ENCODE measurements at regions of chr11 and their contacts with region 1.

Region 1: DNA sequence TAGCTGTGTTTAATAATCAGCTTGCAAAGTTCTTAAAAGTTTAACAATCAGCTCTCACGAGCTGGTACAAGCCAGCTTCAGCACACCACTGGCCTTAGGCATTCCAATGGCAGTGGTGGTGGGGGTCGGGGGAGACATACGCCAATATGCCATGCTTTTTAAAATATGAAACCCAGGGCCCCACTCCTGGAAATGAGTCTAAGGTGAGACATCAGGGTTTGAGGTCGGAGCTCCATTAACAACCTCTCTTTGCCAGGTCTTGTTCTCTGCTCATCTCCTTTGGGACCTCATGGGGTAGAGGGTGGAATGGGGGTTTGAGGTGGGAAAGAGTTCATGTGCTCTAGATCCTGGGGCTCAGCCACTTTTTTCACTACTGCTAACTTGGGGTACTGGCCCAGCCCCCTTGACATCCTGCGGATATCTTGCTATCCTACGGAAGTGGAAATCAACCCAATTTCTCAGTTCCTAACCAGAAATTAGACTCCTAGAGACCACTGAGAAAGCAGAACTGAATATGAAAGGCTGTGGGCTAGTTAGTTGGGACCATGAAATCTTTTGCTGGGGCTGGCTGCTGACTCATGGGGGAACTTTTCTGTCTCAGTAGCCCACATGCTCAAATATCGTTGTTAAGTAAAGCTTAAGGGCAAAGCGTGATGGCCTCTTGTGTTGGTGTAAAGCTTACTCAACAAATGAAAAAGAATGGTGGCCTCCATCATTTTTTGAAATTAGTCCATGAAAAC is 90.1 kb downstream of the PDHX start:
- DNase-seq: no peak
- H3K4me3 ChIP-seq: no peak overlapping the region
- H3K27ac ChIP-seq: no peak overlapping the region
- H3K4me1 ChIP-seq: peaks cover 25% of the 10 kb centered on the region
- H3K27me3 ChIP-seq: no peaks in the 10 kb centered on the region
- CTCF ChIP-seq: no peak

Region 2: GRCh38 chr11:34926101-34926830 is 80.3 kb before region 1 on chr11:
- CTCF ChIA-PET with region 1: no interaction called
- dilution Hi-C with region 1: no loop called
- in situ Hi-C with region 1: no loop called
- intact Hi-C with region 1: no loop called
- DNase-seq: peak; percentile 36
- H3K4me3 ChIP-seq: no peak overlapping the region
- H3K27ac ChIP-seq: no peak overlapping the region
- H3K4me1 ChIP-seq: peaks cover 4% of the 10 kb centered on the region
- H3K27me3 ChIP-seq: no peaks in the 10 kb centered on the region
- CTCF ChIP-seq: peak; percentile 63 to 66

Region 3: GRCh38 chr11:35030716-35031213 is 24.2 kb after region 1 on chr11:
- CTCF ChIA-PET with region 1: interaction called, 5 read pairs
- dilution Hi-C with region 1: no loop called
- in situ Hi-C with region 1: no loop called
- intact Hi-C with region 1: loop called (anchors 1 kb)
- DNase-seq: peak; percentile 97
- H3K4me3 ChIP-seq: peak overlapping the region in 1 of 3 experiments; percentile 4
- H3K27ac ChIP-seq: peak overlapping the region; percentile 97
- H3K4me1 ChIP-seq: peaks cover 45% of the 10 kb centered on the region
- H3K27me3 ChIP-seq: no peaks in the 10 kb centered on the region
- CTCF ChIP-seq: no peak

Region 4: GRCh38 chr11:35040221-35040942 is 33.8 kb after region 1 on chr11:
- CTCF ChIA-PET with region 1: interaction called, 3 read pairs
- dilution Hi-C with region 1: no loop called
- in situ Hi-C with region 1: no loop called
- intact Hi-C with region 1: loop called (anchors 1 kb)
- DNase-seq: peak; percentile 99
- H3K4me3 ChIP-seq: peak overlapping the region; percentile 4 to 40 (median 32)
- H3K27ac ChIP-seq: peak overlapping the region; percentile 97
- H3K4me1 ChIP-seq: peaks cover 64% of the 10 kb centered on the region
- H3K27me3 ChIP-seq: no peaks in the 10 kb centered on the region
- CTCF ChIP-seq: no peak

Region 5: GRCh38 chr11:35057926-35058668 is 51.5 kb after region 1 on chr11:
- CTCF ChIA-PET with region 1: no interaction called
- dilution Hi-C with region 1: no loop called
- in situ Hi-C with region 1: no loop called
- intact Hi-C with region 1: loop called (anchors 1 kb)
- DNase-seq: no peak
- H3K4me3 ChIP-seq: no peak overlapping the region
- H3K27ac ChIP-seq: peak overlapping the region; percentile 90
- H3K4me1 ChIP-seq: peaks cover 24% of the 10 kb centered on the region
- H3K27me3 ChIP-seq: no peaks in the 10 kb centered on the region
- CTCF ChIP-seq: no peak

Region 6: DNA sequence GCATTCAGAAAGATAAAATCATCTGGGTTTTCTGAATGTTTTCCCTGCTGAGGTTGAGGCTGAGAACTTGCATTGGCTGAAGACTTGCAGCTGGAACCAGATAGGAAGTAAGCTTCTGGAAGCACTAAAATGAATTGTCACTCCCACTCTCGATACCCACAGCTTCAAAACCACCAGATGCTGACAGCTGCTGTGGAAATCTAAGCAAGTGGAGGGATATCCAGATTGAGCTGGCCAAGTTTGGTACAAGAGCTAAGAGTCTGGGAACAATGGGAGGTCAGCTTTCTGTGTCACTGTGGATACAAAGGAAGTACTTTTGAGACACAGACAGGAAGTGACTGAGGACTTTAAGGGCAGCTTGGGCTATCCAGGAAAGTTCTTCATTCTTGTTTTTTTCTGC is 81.1 kb after region 1 on chr11:
- CTCF ChIA-PET with region 1: interaction called, 5 read pairs
- dilution Hi-C with region 1: loop called (anchors 5 kb)
- in situ Hi-C with region 1: no loop called
- intact Hi-C with region 1: loop called (anchors 2 kb)
- DNase-seq: no peak
- H3K4me3 ChIP-seq: no peak overlapping the region
- H3K27ac ChIP-seq: peak overlapping the region; percentile 87
- H3K4me1 ChIP-seq: peaks cover 49% of the 10 kb centered on the region
- H3K27me3 ChIP-seq: no peaks in the 10 kb centered on the region
- CTCF ChIP-seq: no peak

Region 7: DNA sequence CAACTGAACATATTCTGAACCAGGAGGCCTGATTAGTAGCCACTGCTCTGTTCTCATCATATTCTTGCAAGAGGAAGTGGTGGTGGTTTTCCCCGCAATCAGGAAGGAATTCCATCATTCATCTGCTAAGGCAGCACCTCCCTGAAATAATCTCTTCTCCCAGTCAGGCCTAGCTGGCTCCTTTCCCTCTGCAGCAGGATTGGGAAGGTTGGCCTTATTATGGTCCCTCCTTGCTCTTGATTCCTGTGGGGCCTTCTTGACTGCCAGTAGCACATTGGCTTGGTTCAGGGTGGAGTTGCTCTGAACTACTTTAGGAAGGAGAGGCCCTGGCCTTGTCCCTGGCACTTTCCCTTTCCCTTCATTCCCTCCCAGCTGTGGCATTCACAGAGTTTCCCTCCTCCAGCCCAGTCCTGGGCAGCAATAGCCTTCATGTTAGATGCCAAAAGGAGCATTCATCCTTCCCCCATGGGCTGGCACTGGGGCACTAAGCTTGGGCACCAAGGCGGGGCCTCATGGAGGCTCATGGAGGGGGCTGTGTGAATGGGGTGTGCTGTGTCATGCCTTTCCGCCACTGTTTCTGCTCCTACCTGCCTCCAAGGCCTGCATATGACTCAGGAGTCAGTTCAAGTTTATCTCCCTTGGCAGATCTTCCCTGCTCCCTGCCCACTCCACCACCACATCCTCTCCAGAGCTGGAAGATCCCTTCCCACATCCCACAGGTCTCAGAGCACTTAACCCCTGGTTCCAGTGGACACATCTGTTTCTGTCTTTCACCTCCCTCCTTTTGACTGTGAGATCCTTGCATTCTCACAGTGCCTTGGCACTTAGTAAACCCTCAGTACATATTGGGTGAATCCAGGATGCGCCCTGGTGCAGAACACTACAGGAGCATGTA is 104.8 kb after region 1 on chr11:
- CTCF ChIA-PET with region 1: no interaction called
- dilution Hi-C with region 1: no loop called
- in situ Hi-C with region 1: no loop called
- intact Hi-C with region 1: loop called (anchors 1 kb)
- DNase-seq: peak; percentile 99
- H3K4me3 ChIP-seq: peak overlapping the region in 1 of 3 experiments; percentile 17
- H3K27ac ChIP-seq: peak overlapping the region; percentile 94
- H3K4me1 ChIP-seq: peaks cover 70% of the 10 kb centered on the region
- H3K27me3 ChIP-seq: no peaks in the 10 kb centered on the region
- CTCF ChIP-seq: no peak

Region 8: DNA sequence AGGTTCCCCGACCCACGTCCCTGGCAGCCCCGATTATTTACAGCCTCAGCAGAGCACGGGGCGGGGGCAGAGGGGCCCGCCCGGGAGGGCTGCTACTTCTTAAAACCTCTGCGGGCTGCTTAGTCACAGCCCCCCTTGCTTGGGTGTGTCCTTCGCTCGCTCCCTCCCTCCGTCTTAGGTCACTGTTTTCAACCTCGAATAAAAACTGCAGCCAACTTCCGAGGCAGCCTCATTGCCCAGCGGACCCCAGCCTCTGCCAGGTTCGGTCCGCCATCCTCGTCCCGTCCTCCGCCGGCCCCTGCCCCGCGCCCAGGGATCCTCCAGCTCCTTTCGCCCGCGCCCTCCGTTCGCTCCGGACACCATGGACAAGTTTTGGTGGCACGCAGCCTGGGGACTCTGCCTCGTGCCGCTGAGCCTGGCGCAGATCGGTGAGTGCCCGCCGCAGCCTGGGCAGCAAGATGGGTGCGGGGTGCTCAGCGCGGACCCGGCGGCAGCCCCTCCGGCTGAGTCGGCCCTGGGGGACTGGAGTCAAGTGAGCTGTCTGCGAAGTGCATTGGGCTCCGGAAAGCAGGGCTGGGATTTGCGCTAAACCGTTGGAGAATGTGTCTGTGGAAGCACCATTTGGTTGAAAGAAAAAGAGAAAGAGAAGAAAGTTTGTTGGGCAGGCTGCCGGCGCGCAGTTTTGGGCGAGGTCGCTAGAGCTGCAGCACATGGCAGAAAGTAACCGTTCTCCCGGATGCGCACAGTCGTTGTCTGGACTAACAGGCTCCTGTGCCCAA is 132.6 kb after region 1 on chr11 and contains the start of gene CD44:
- CTCF ChIA-PET with region 1: no interaction called
- dilution Hi-C with region 1: loop called (anchors 5 kb)
- in situ Hi-C with region 1: no loop called
- intact Hi-C with region 1: loop called (anchors 1 kb)
- DNase-seq: peak; percentile 89
- H3K4me3 ChIP-seq: peak within 1 kb of the TSS; percentile 85 to 98 (median 88)
- H3K27ac ChIP-seq: peak within 1 kb of the TSS; percentile 95
- H3K4me1 ChIP-seq: peaks cover 29% of the 10 kb centered on the region
- H3K27me3 ChIP-seq: no peaks in the 10 kb centered on the region
- CTCF ChIP-seq: no peak
- total RNA-seq, gene CD44: 1,362 to 2,544 TPM

Measured in mammary epithelial cell (primary cell).